ENCODE measurements at regions of chr5 and their contacts with region 1.

Region 1: DNA sequence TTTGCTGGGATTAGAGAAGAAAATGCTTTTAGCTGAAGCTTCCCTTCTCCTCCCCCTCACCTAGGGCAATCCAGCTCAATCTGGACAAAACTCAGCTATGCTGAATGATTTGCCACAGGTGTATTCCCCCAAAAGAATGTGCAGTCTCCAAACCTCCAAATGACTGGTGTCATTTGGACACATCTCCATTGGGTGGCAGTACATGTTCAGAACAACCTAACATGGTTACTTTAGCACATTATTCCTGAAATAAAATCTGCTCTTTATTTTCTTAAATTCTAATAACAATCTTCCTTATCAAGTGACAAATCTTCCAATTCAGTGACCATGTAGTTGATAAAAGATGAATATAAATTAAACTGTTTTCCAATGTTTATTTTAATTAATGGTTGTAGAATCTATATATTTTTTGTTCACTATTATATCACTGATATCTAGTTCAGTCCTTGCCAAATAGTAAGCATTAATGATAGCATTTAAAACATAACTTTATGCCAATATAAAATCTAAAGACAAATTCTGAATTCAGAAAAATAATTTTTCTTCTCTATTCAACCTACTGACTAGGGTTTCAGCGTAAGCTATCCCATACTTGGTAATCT is 61.3 kb upstream of the MOCS2 start:
- DNase-seq: peak in 18 of 42 donors; percentile 8 to 55 (median 30)

Region 2: DNA sequence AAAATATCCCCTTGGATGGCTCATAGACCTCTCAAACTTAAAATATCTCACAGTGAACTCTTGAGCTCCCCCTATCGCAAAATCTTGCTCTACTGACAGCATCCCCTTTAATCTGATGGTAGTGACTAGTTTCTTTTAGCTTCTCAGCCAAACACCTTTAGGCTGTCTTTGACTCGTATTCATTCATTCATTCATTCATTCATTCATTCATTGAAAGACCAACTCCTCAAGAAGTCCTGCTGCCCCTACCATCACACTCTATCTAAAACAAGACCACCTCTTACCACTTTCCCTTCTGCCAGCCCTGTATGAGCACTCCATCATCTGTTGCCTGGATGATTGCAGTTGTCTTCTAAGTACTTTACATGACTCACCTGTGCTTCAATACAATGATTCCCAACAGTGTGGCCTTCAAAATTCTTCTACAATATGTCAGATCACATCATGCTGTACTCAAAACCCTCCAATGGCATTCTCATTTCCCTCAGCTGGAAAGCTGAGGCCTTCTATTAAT is 134.9 kb before region 1 on chr5:
- intact Hi-C with region 1: no loop called
- DNase-seq: peak in 3 of 42 donors; percentile 11 to 58 (median 49)

Region 3: DNA sequence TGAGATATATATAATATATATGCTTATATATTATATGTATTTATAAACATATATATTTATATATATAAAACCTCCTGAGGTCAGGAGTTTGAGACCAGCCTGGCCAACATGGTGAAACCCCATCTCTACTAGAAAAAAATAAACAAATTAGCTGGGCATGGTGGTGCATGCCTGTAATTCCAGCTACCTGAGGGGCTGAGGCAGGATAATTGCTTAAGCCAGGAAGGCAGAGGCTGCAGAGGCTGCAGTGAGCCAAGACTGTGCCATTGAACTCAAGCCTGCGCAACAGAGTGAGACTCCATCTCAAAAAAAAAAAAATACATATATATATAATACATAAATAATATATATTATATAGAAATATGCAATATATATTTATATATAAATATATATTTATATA is 521.8 kb after region 1 on chr5:
- intact Hi-C with region 1: no loop called
- DNase-seq: no peak

Region 4: GRCh38 chr5:54229041-54229780 is 1058.4 kb after region 1 on chr5:
- intact Hi-C with region 1: loop called (anchors 10 kb)
- DNase-seq: peak; percentile 38 to 92 (median 80)

Measured in head of caudate nucleus (tissue), 42 donors.